Activated naive CD4-positive, alpha-beta T cell treated with anti-CD3 and anti-CD28 coated beads for 36 hours (primary cell): ENCODE measurements at regions of chr13 and their contacts with region 1.

Region 1: DNA sequence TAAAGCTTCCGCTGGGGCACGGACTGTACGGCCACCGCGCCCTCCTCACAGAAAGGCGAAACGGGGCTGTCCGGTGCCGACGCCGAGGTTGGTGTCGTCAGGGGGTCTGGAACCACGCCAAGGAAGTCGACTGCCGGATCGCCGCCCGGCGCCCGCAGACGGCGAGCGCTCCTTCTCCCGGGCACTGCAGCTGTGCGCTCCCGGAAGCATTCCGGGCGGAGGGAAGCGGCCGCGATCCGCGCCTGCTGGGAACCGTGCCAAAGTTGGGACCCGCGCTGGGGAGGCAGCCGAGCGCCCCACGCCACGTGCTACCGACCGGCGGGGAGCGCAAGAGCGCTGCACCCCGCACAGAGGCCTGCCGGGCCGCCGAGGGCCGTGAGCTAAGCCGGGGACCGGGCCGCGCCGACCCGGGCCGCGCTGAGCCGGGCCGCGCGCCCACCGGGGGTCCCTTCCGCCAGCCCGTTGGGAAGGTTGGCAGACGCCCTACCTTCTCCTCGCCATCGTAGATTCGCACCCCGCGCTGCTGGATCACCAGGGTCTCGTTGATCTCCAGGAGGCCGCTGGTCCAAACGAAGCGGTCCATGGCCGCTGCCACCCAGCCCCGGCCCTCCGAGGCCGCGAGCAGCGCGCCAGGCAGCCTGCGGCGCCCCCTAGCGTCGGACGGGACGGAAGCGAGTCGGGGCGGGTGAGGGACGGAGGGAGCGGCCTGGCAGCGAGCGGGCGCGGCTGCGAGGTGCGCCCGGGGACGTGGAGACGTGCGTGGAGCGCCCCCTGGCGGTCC is at the start of gene VPS36:
- DNase-seq: peak; percentile 94
- H3K4me3 Mint-ChIP-seq: peak within 1 kb of the TSS; percentile 92
- H3K27ac Mint-ChIP-seq: peak within 1 kb of the TSS; percentile 86
- H3K4me1 Mint-ChIP-seq: peaks cover 30% of the 10 kb centered on the region
- H3K27me3 Mint-ChIP-seq: no peaks in the 10 kb centered on the region
- total RNA-seq, gene VPS36: 25.3 to 32.0 TPM

Region 2: GRCh38 chr13:51895906-51896888 is 554.0 kb before region 1 on chr13:
- CTCF ChIA-PET with region 1: no interaction called
- intact Hi-C with region 1: loop called (anchors 1 kb)
- DNase-seq: peak; percentile 69
- H3K4me3 Mint-ChIP-seq: no peak overlapping the region
- H3K27ac Mint-ChIP-seq: no peak overlapping the region
- H3K4me1 Mint-ChIP-seq: no peaks in the 10 kb centered on the region
- H3K27me3 Mint-ChIP-seq: peaks cover 2% of the 10 kb centered on the region

Region 3: GRCh38 chr13:52011632-52012511 is 438.3 kb before region 1 on chr13 and contains the start of gene ALG11:
- CTCF ChIA-PET with region 1: interaction called, 4 read pairs
- intact Hi-C with region 1: loop called (anchors 1 kb)
- DNase-seq: peak; percentile 100
- H3K4me3 Mint-ChIP-seq: peak within 1 kb of the TSS; percentile 98
- H3K27ac Mint-ChIP-seq: peak within 1 kb of the TSS; percentile 85
- H3K4me1 Mint-ChIP-seq: peaks cover 14% of the 10 kb centered on the region
- H3K27me3 Mint-ChIP-seq: peaks cover 10% of the 10 kb centered on the region
- total RNA-seq, gene ALG11: 12.6 to 15.6 TPM

Region 4: DNA sequence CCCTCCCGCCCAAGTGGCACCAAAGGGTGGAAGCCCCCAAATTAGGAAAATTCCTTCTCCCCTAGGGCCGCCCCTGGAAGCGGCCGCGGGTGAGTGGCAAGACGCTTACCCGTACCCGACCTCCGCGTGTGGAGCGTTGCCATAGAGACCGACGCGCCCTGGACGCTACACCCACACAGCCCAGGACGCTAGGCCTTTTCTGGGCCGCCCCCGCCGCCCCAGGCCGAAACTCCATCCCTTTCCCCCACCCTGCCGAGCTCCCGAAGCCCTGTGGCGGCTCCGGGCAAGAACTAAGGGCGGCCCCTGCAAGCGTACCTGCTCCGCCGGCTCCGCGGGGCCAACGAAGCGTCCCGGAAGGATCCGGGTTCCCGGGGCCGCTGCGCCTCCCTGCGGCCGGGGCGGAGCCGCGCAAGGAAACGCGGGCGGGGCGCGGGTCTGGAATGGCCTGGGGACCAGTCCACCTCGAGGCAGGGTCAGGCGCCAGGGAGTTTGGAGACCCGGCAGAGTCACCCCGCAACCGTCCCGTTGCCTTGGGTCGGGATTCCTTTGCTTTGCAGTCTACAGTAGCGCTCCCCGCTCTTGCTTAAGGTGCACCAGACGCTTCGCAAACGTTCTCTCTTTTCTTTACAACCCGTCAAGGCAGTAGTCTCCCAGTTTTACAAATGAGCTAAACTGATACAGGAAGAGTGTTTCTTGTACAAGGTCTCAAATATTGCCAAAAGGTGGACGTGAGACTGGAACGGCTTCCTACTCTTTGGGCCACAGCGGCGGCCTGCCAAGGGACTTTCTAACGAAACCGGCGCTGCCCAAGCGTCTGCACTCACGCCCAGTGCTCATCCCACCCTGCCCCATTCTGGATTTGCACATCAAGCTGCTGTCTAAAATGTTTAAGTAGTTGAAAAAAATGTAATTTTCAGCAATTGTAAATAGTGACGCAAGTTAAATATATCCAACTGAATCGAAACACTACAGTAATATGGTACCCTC is 321.2 kb before region 1 on chr13 and contains the start of gene NEK5:
- CTCF ChIA-PET with region 1: interaction called, 4 read pairs
- intact Hi-C with region 1: loop called (anchors 1 kb)
- DNase-seq: peak; percentile 68
- H3K4me3 Mint-ChIP-seq: peak within 1 kb of the TSS; percentile 70
- H3K27ac Mint-ChIP-seq: no peak within 1 kb of the TSS
- H3K4me1 Mint-ChIP-seq: peaks cover 12% of the 10 kb centered on the region
- H3K27me3 Mint-ChIP-seq: peaks cover 2% of the 10 kb centered on the region
- total RNA-seq, gene NEK5: 0.10 to 0.14 TPM

Region 5: DNA sequence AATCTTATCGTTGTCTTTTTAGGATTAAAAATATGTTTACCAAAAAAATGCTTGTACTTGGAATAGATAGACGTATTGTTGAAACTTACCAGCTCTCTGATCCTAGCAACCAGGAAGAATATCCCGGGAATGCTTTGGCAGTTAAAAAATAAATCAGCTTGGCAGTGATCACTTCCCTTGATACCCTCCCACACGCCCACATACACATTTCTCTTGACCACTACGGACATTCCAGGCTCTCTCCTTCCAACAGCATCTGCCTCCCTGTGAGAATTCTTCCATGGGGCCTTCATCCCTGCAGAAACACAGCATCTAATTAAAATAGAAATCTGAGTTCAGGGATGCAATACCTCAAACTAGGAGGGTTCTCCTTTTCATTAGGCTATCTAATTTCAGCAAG is 102.1 kb before region 1 on chr13:
- CTCF ChIA-PET with region 1: interaction called, 14 read pairs
- intact Hi-C with region 1: loop called (anchors 1 kb)
- DNase-seq: no peak
- H3K4me3 Mint-ChIP-seq: no peak overlapping the region
- H3K27ac Mint-ChIP-seq: no peak overlapping the region
- H3K4me1 Mint-ChIP-seq: no peaks in the 10 kb centered on the region
- H3K27me3 Mint-ChIP-seq: peaks cover 7% of the 10 kb centered on the region

Region 6: DNA sequence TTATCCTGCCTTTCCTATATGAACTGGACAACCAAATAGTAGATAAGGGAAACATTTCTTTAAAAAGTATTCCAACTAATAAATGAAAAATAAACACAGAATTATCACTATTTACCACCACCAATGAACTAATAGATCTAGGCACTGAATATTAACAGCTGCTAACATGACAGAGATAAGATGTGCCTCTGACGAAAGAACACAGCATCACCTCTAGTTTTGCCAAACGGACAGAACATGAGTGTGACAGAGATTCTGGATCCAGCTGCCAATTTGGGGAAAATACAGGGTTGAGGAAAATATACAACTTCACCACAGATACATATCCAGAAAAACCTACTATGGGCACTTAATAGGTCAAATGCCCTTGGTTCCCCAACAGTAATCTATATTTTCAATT is 17.7 kb before region 1 on chr13:
- CTCF ChIA-PET with region 1: interaction called, 18 read pairs
- intact Hi-C with region 1: no loop called
- DNase-seq: no peak
- H3K4me3 Mint-ChIP-seq: no peak overlapping the region
- H3K27ac Mint-ChIP-seq: no peak overlapping the region
- H3K4me1 Mint-ChIP-seq: no peaks in the 10 kb centered on the region
- H3K27me3 Mint-ChIP-seq: no peaks in the 10 kb centered on the region

Region 7: DNA sequence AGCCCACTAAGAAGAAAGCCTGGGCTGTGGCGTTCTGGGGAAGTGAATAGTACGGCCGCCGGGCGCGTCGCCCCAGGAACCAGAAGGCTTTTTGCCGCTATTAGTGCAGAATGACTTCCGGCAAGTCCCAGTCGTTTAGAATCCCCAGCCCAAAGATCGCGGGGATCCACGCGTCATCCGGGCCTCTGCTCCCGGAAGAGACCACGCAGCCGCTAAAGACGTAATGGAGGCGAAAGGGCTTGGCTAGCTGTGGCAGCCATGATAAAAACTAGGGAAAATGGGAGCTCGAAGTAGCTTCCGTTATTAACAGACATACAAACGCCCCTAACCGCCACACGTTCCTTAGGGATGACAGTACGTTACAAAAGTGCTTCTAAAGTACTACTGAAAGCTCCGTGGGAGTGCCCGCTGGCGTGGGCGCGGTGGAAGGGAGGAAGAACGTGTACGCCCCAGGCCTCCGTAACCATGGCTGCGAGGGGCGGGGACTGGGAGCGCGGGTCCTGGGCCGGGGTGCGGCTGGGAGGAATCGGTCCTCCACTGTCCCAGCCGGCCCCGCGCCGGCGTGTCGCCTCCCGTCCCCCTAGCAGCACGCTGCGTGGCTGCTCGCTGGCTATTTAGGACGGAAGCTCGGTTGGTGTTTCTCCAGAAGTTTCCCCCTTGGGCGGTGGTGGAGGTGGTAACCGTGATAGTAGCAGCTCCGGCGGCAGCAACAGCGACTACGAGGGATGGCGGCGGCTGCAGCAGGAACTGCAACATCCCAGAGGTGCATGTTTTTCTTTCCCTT is 202.2 kb after region 1 on chr13 and contains the start of gene SUGT1:
- CTCF ChIA-PET with region 1: interaction called, 4 read pairs
- intact Hi-C with region 1: loop called (anchors 1 kb)
- DNase-seq: peak; percentile 95
- H3K4me3 Mint-ChIP-seq: no peak within 1 kb of the TSS
- H3K27ac Mint-ChIP-seq: no peak within 1 kb of the TSS
- H3K4me1 Mint-ChIP-seq: peaks cover 14% of the 10 kb centered on the region
- H3K27me3 Mint-ChIP-seq: no peaks in the 10 kb centered on the region
- total RNA-seq, gene SUGT1: 42.7 to 44.1 TPM